ENCODE measurements at regions of chr11 and their contacts with region 1.

Region 1: GRCh38 chr11:66408488-66409214 is 12.2 kb upstream of the NPAS4 start:
- DNase-seq: peak; percentile 97

Region 2: GRCh38 chr11:66299186-66299585 is 109.5 kb before region 1 on chr11:
- intact Hi-C with region 1: no loop called
- DNase-seq: no peak

Region 3: GRCh38 chr11:66363805-66364535 is 44.7 kb before region 1 on chr11:
- intact Hi-C with region 1: loop called in 1 of 2 experiments (anchors 1 kb)
- DNase-seq: peak; percentile 81

Region 4: DNA sequence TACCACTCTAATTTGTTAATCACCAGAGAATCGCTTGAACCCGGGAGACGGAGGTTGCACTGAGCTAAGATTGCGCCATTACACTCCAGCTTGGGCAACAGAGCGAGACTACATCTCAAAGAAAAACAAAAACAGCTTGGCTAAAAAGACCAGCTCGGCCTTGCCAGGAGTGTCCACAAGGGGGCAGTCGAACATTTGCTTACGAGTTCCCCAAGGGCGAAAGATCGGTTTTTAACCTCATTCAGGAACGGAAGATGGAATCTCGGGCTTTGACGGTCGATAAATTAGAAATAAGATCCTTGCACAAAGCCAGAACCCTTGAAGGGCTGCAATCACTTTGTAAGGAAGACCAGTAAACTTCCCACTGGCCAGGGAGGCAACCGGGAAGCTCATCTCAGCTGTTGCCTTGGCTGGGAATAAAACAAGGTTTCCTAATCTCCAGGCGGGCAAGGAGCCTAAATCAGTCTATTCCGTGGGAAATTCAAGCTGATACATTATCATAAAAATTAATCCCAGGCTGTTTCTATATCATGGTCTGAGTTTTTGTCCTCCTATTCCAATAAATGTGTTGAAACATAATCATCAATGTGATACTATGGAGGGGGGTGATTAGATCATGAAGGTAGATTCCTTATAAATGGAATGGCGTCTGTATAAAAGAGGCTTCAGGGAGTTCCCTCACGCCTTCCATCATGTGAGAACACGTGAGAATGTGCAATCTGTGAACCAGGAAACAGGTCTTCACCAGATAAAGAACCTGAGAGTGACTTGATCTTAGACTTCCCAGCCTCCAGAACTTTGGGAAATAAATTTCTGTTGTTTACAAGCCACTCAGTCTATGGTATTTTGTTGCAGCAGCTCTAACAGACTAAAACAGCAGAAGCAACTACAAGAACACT is 22.2 kb before region 1 on chr11:
- intact Hi-C with region 1: no loop called
- DNase-seq: peak; percentile 96

Region 5: GRCh38 chr11:66429983-66430602 is 21.4 kb after region 1 on chr11:
- intact Hi-C with region 1: loop called (anchors 1 to 2 kb)
- DNase-seq: peak; percentile 93

Region 6: GRCh38 chr11:66466225-66467027 is 57.8 kb after region 1 on chr11 and contains the start of gene PELI3:
- intact Hi-C with region 1: no loop called
- DNase-seq: peak; percentile 97
- total RNA-seq, gene PELI3: 12.4 to 13.0 TPM